Naive thymus-derived CD4-positive, alpha-beta T cell (primary cell): ENCODE measurements at regions of chr2 and their contacts with region 1.

Region 1: DNA sequence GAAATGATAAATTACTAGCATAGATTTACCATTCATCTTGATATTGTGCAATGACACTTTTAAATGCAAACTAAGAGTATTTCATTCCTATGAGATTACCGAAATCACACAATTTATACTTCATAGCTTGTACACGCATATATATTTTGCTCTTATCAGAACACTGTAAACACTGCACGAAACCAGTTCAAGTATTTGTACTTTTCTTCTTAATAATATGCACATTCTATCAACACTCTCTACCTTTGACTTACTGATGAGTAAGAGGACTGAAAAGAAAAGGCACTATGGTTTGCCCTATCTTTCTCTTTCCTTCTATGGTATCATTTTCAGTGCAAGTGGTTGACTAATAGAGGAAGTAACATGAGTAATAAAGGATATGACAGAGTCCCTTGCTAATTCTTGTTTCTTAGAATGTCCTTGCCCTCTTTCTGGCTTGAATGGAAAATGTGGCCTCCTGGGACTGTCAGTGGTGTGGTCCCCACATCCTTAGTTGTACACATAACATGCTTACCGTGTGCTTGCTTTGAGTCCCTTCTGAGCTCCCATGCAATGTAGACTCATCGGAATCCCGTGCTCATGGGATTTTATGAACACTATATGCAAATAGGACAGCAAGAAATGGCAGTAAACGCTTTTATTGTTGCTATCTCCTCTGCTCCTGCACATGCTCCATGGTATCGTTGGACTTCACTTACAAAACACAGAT is 363.5 kb upstream of the TNP1 start:
- DNase-seq: peak in 1 of 9 donors; percentile 60
- ATAC-seq: peak; percentile 78
- H3K4me3 ChIP-seq: no peak overlapping the region
- H3K4me3 Mint-ChIP-seq: peak overlapping the region in 1 of 10 donors; percentile 64
- H3K27ac ChIP-seq: no peak overlapping the region
- H3K27ac Mint-ChIP-seq: peak overlapping the region in 1 of 9 donors; percentile 88
- H3K4me1 ChIP-seq: no peaks in the 10 kb centered on the region
- H3K4me1 Mint-ChIP-seq: peaks cover 4 to 42% (median 6%) of the 10 kb centered on the region in 7 donors
- H3K27me3 ChIP-seq: no peaks in the 10 kb centered on the region
- H3K27me3 Mint-ChIP-seq: peaks cover 0 to 3% (median 0%) of the 10 kb centered on the region in 5 donors

Region 2: GRCh38 chr2:216713691-216714336 is 509.6 kb before region 1 on chr2:
- CTCF ChIA-PET with region 1: no interaction called
- POLR2A ChIA-PET with region 1: no interaction called
- intact Hi-C with region 1: no loop called
- DNase-seq: no peak
- ATAC-seq: no peak
- H3K4me3 ChIP-seq: no peak overlapping the region
- H3K4me3 Mint-ChIP-seq: no peak overlapping the region
- H3K27ac ChIP-seq: no peak overlapping the region
- H3K27ac Mint-ChIP-seq: no peak overlapping the region
- H3K4me1 ChIP-seq: no peaks in the 10 kb centered on the region
- H3K4me1 Mint-ChIP-seq: no peaks in the 10 kb centered on the region
- H3K27me3 ChIP-seq: no peaks in the 10 kb centered on the region
- H3K27me3 Mint-ChIP-seq: peaks cover 0 to 23% (median 10%) of the 10 kb centered on the region in 5 donors

Region 3: GRCh38 chr2:216857131-216857550 is 366.2 kb before region 1 on chr2:
- CTCF ChIA-PET with region 1: no interaction called
- POLR2A ChIA-PET with region 1: no interaction called
- intact Hi-C with region 1: loop called in 1 of 2 experiments (anchors 1 kb)
- DNase-seq: peak in 2 of 9 donors; percentile 15 to 44
- ATAC-seq: peak; percentile 69
- H3K4me3 ChIP-seq: no peak overlapping the region
- H3K4me3 Mint-ChIP-seq: peak overlapping the region in 1 of 10 donors; percentile 27
- H3K27ac ChIP-seq: no peak overlapping the region
- H3K27ac Mint-ChIP-seq: peak overlapping the region in 4 of 9 donors; percentile 1 to 54 (median 27)
- H3K4me1 ChIP-seq: peaks cover 0 to 5% of the 10 kb centered on the region in 2 donors
- H3K4me1 Mint-ChIP-seq: peaks cover 9 to 30% (median 20%) of the 10 kb centered on the region in 7 donors
- H3K27me3 ChIP-seq: no peaks in the 10 kb centered on the region
- H3K27me3 Mint-ChIP-seq: peaks cover 0 to 3% (median 0%) of the 10 kb centered on the region in 5 donors

Region 4: GRCh38 chr2:217090024-217090473 is 133.3 kb before region 1 on chr2:
- CTCF ChIA-PET with region 1: no interaction called
- POLR2A ChIA-PET with region 1: no interaction called
- intact Hi-C with region 1: loop called in 1 of 2 experiments (anchors 10 kb)
- DNase-seq: peak in 3 of 9 donors; percentile 2 to 16 (median 9)
- ATAC-seq: no peak
- H3K4me3 ChIP-seq: peak overlapping the region; percentile 16
- H3K4me3 Mint-ChIP-seq: peak overlapping the region in 9 of 10 donors; percentile 30 to 71 (median 61)
- H3K27ac ChIP-seq: no peak overlapping the region
- H3K27ac Mint-ChIP-seq: peak overlapping the region in 5 of 9 donors; percentile 0 to 76 (median 10)
- H3K4me1 ChIP-seq: no peaks in the 10 kb centered on the region
- H3K4me1 Mint-ChIP-seq: peaks cover 8 to 32% (median 13%) of the 10 kb centered on the region in 7 donors
- H3K27me3 ChIP-seq: no peaks in the 10 kb centered on the region
- H3K27me3 Mint-ChIP-seq: peaks cover 0 to 14% (median 0%) of the 10 kb centered on the region in 5 donors

Region 5: DNA sequence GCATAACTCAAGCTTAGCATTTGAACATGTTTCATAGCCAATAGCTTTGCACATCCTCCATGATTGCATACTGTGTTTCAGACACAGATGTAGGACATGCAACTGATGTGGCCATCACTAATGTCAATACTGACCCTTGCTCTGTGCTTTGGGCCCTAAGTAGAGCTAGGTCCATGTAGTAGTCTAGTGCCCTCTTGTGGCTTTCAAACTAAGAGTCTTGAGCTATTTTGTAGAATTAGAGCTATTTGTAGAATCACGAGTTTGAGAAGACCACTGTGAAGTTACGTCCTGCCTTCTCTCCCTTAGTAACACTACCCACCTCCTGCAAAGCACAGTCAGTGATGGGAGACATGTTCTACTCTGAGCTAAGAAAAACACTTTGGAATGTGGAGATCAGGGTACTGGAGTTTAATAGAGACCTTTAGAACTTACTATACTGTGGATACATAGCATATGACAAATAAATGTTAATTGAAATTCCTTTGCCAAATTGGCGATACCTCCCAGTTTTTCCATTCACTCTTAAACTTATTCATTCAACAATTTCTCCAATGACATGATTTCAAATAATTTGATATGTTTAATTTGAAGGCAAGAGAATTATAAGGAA is 57.0 kb before region 1 on chr2:
- CTCF ChIA-PET with region 1: no interaction called
- POLR2A ChIA-PET with region 1: no interaction called
- intact Hi-C with region 1: loop called in 1 of 2 experiments (anchors 2 kb)
- DNase-seq: no peak
- ATAC-seq: no peak
- H3K4me3 ChIP-seq: no peak overlapping the region
- H3K4me3 Mint-ChIP-seq: no peak overlapping the region
- H3K27ac ChIP-seq: no peak overlapping the region
- H3K27ac Mint-ChIP-seq: no peak overlapping the region
- H3K4me1 ChIP-seq: no peaks in the 10 kb centered on the region
- H3K4me1 Mint-ChIP-seq: peaks cover 11 to 20% (median 16%) of the 10 kb centered on the region in 7 donors
- H3K27me3 ChIP-seq: no peaks in the 10 kb centered on the region
- H3K27me3 Mint-ChIP-seq: peaks cover 0 to 33% (median 14%) of the 10 kb centered on the region in 5 donors

Region 6: DNA sequence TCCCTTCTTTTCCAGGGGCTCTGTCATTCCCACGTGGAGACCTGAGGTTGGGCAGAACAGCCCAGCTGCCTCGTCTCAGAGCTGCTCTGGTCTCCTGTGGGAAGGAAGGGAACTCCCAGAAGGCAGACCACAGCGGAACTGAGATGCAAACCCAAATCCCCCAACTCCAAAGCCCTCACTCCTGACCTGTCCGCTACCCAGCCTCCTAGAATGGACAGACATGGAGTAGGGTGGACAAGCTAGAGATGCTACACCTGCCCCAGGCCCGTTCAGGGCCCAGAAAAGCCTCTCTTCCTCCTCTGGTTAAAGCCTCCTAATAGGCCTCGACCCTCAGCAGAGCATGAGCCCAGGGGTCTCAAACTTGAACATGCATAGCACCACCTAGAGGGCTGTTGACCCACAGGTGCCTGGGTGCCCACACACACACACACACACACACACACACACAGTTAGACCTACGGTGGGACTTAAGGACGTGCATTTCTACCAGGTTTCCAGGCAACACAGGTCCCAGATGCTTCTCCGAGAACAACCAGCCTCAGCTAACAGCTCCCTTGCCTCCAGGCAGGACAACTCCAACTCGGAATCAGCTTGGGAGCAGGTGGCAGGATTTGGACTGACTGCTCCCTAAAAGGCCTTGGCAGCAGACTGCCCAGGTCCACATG is 685.9 kb after region 1 on chr2:
- CTCF ChIA-PET with region 1: no interaction called
- POLR2A ChIA-PET with region 1: no interaction called
- intact Hi-C with region 1: no loop called
- DNase-seq: no peak
- ATAC-seq: no peak
- H3K4me3 ChIP-seq: no peak overlapping the region
- H3K4me3 Mint-ChIP-seq: no peak overlapping the region
- H3K27ac ChIP-seq: no peak overlapping the region
- H3K27ac Mint-ChIP-seq: no peak overlapping the region
- H3K4me1 ChIP-seq: no peaks in the 10 kb centered on the region
- H3K4me1 Mint-ChIP-seq: peaks cover 0 to 5% (median 0%) of the 10 kb centered on the region in 7 donors
- H3K27me3 ChIP-seq: no peaks in the 10 kb centered on the region
- H3K27me3 Mint-ChIP-seq: peaks cover 6 to 29% (median 24%) of the 10 kb centered on the region in 5 donors